Astrocyte of the cerebellum (primary cell): ENCODE measurements at regions of chr9 and their contacts with region 1.

Region 1: DNA sequence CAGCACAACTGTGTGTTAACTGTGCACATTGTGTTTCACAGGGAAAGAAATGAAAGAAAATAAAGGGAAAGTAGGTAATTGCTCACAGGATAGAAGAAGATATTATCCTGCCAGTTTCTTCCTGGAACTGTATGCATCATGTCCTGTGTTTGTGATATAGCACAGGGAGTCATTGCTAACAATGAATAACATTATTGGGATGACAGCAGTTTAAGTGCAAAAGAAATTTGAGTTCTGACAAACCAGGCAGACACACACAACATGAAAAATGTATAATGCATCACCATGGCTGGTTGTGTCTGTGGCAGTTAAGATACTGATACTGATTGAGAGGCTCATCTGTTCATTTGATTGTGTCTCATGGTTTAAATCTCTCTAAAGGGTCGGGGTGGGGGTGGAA is 145.4 kb downstream of the SPATA31D1 start:
- DNase-seq: no peak
- H3K4me3 ChIP-seq: no peak overlapping the region
- CTCF ChIP-seq: no peak

Region 2: GRCh38 chr9:82057805-82058204 is 76.2 kb before region 1 on chr9:
- in situ Hi-C with region 1: no loop called
- DNase-seq: no peak
- H3K4me3 ChIP-seq: no peak overlapping the region
- CTCF ChIP-seq: no peak

Region 3: GRCh38 chr9:82209797-82210470 is 75.9 kb after region 1 on chr9:
- in situ Hi-C with region 1: loop called (anchors 5 kb)
- DNase-seq: no peak
- H3K4me3 ChIP-seq: no peak overlapping the region
- CTCF ChIP-seq: no peak

Region 4: DNA sequence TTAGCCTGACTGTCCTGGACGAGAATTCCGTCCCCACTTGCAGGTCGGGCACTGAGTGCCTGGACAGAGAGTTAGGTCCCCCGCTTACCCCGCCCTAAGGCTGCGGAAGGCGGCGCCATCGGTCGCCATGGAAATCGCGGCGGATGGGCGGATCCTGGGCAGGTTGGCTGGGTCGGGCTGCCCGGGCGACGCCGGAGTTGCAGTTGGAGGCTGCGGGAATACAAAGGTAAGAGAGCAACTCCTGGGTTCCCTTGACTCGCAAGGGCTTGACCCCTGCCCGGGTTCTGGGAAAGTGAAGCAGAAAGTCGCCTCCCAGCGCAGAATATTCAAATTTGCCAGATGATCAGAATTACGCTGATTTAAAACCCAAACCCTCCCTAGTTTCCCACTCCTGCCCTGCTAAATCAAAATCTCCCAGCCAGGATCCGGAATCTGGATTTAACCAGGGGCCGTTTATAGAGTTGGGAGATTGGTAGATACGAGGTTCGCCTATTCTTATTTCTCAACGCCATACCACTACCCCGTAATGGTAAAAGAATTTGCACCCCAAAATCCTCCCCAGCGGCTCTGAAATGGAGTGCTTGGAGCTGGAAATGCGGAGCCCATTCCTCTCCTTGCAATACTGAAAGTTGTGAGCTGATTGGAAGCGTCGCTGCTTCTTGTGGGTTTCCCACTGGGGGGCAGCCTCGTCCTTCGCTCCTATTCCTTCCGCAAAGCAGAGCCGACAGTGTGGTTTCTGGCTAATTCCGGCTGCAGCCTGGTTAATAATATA is 1085.3 kb after region 1 on chr9:
- in situ Hi-C with region 1: no loop called
- DNase-seq: peak; percentile 68
- H3K4me3 ChIP-seq: peak overlapping the region; percentile 65
- CTCF ChIP-seq: peak; percentile 29